Naive thymus-derived CD4-positive, alpha-beta T cell (primary cell): ENCODE measurements at regions of chr6 and their contacts with region 1.

Region 1: DNA sequence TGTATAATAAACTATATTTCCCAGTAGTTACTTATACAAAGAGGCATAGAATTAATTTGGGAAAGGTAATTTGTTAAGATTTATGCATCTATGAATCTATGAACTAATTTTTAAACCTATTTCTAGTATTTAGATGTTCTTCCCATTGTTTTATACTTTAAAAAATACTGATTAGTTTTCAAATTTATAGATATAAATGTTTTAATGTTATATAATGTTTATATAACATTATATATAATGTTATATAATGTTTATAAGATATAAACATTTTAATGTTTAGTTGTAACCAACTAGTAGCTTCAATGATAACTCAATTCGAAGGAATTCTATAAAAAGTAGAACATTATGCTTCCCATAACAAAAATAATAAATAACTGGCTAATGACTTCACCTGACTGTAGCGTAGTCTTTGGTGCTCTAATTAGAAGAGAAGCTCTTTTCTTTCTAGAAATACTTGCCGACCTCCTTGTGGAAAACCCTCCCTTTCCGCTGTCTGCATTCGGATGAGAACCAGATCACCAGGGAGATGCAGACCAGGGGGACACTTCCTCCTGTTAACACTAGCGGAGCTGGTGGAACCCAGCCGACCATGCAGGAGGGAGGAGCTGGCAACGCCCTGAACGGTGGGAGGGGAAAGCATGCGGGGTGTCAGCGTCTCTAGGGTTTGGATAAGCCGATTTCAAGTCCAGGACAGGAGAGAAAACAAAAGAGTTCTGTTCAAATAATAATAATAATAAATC is 158.4 kb downstream of the OR2B2 start:
- DNase-seq: peak in 8 of 9 donors; percentile 38 to 69 (median 45)
- ATAC-seq: peak; percentile 22
- H3K4me3 ChIP-seq: peak overlapping the region; percentile 80
- H3K4me3 Mint-ChIP-seq: peak overlapping the region; percentile 81 to 99 (median 94)
- H3K27ac ChIP-seq: peak overlapping the region; percentile 96
- H3K27ac Mint-ChIP-seq: peak overlapping the region; percentile 84 to 100 (median 97)
- H3K4me1 ChIP-seq: peaks cover 6 to 20% of the 10 kb centered on the region in 2 donors
- H3K4me1 Mint-ChIP-seq: peaks cover 17 to 53% (median 39%) of the 10 kb centered on the region in 7 donors
- H3K27me3 ChIP-seq: no peaks in the 10 kb centered on the region
- H3K27me3 Mint-ChIP-seq: peaks cover 0 to 8% (median 0%) of the 10 kb centered on the region in 5 donors

Region 2: DNA sequence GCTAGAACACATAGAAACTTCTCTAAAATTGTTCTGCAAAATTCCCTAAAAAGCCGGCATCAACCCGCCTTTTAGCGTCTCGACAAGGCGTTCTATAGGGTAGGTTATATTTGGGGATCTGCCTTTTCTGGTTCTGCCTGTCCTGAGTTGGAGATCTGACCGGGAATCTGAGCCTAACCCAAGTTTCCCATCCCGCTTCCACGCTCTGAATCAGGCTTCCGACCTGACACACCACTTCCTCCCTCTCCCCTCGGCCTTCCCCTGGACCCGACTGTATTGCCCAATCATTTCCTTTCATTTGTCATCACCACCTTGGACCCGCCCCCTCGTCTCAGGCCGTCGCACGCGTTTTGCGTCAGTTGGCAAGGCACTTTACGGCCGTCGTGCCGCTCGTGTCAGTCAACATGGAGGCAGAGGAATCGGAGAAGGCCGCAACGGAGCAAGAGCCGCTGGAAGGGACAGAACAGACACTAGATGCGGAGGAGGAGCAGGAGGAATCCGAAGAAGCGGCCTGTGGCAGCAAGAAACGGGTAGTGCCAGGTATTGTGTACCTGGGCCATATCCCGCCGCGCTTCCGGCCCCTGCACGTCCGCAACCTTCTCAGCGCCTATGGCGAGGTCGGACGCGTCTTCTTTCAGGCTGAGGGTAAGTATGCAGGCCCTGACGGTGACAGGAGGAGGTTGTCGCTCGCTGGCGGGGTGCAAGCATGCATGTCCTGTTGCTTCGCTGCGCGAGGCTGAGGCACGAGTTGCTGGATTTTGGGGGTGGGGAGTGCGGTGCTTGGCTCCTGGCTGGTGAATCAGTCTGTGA is 1157.1 kb before region 1 on chr6 and contains the start of gene ABT1:
- CTCF ChIA-PET with region 1: no interaction called
- POLR2A ChIA-PET with region 1: no interaction called
- intact Hi-C with region 1: loop called in 1 of 2 experiments (anchors 1 kb)
- DNase-seq: peak; percentile 87 to 96 (median 95)
- ATAC-seq: peak; percentile 95
- H3K4me3 ChIP-seq: peak within 1 kb of the TSS; percentile 81
- H3K4me3 Mint-ChIP-seq: no peak within 1 kb of the TSS
- H3K27ac ChIP-seq: peak within 1 kb of the TSS; percentile 89
- H3K27ac Mint-ChIP-seq: peak within 1 kb of the TSS in 1 of 9 donors; percentile 92
- H3K4me1 ChIP-seq: peaks cover 17 to 22% of the 10 kb centered on the region in 2 donors
- H3K4me1 Mint-ChIP-seq: peaks cover 5 to 20% (median 10%) of the 10 kb centered on the region in 7 donors
- H3K27me3 ChIP-seq: peaks cover 8 to 14% of the 10 kb centered on the region in 2 donors
- H3K27me3 Mint-ChIP-seq: peaks cover 3 to 28% (median 16%) of the 10 kb centered on the region in 5 donors
- total RNA-seq, gene ABT1: 23.3 to 37.5 (median 35.0) TPM

Region 3: GRCh38 chr6:27332692-27333641 is 420.9 kb before region 1 on chr6:
- CTCF ChIA-PET with region 1: no interaction called
- POLR2A ChIA-PET with region 1: no interaction called
- intact Hi-C with region 1: loop called in 1 of 2 experiments (anchors 1 kb)
- DNase-seq: peak in 8 of 9 donors; percentile 18 to 79 (median 68)
- ATAC-seq: peak; percentile 74
- H3K4me3 ChIP-seq: peak overlapping the region; percentile 60
- H3K4me3 Mint-ChIP-seq: peak overlapping the region; percentile 67 to 94 (median 87)
- H3K27ac ChIP-seq: no peak overlapping the region
- H3K27ac Mint-ChIP-seq: peak overlapping the region; percentile 0 to 97 (median 84)
- H3K4me1 ChIP-seq: peaks cover 0 to 3% of the 10 kb centered on the region in 2 donors
- H3K4me1 Mint-ChIP-seq: peaks cover 7 to 21% (median 13%) of the 10 kb centered on the region in 7 donors
- H3K27me3 ChIP-seq: peaks cover 0 to 8% of the 10 kb centered on the region in 2 donors
- H3K27me3 Mint-ChIP-seq: peaks cover 21 to 53% (median 25%) of the 10 kb centered on the region in 5 donors

Region 4: GRCh38 chr6:27592481-27593199 is 161.2 kb before region 1 on chr6:
- CTCF ChIA-PET with region 1: no interaction called
- POLR2A ChIA-PET with region 1: no interaction called
- intact Hi-C with region 1: loop called in 1 of 2 experiments (anchors 5 kb)
- DNase-seq: peak in 4 of 9 donors; percentile 10 to 58 (median 28)
- ATAC-seq: no peak
- H3K4me3 ChIP-seq: no peak overlapping the region
- H3K4me3 Mint-ChIP-seq: no peak overlapping the region
- H3K27ac ChIP-seq: no peak overlapping the region
- H3K27ac Mint-ChIP-seq: no peak overlapping the region
- H3K4me1 ChIP-seq: peaks cover 0 to 11% of the 10 kb centered on the region in 2 donors
- H3K4me1 Mint-ChIP-seq: peaks cover 0 to 4% (median 0%) of the 10 kb centered on the region in 7 donors
- H3K27me3 ChIP-seq: peaks cover 25 to 29% of the 10 kb centered on the region in 2 donors
- H3K27me3 Mint-ChIP-seq: peaks cover 24 to 46% (median 43%) of the 10 kb centered on the region in 5 donors

Region 5: GRCh38 chr6:27809939-27810767 is 56.3 kb after region 1 on chr6:
- CTCF ChIA-PET with region 1: interaction called, 3 read pairs
- POLR2A ChIA-PET with region 1: interaction called, 10 read pairs
- intact Hi-C with region 1: loop called in 1 of 2 experiments (anchors 1 kb)
- DNase-seq: peak; percentile 66 to 96 (median 92)
- ATAC-seq: peak; percentile 71
- H3K4me3 ChIP-seq: peak overlapping the region; percentile 76
- H3K4me3 Mint-ChIP-seq: peak overlapping the region; percentile 81 to 97 (median 94)
- H3K27ac ChIP-seq: peak overlapping the region; percentile 86
- H3K27ac Mint-ChIP-seq: peak overlapping the region; percentile 95 to 99 (median 98)
- H3K4me1 ChIP-seq: peaks cover 20 to 42% of the 10 kb centered on the region in 2 donors
- H3K4me1 Mint-ChIP-seq: peaks cover 18 to 82% (median 61%) of the 10 kb centered on the region in 7 donors
- H3K27me3 ChIP-seq: no peaks in the 10 kb centered on the region
- H3K27me3 Mint-ChIP-seq: peaks cover 0 to 9% (median 0%) of the 10 kb centered on the region in 5 donors

Region 6: GRCh38 chr6:28335564-28336283 is 581.9 kb after region 1 on chr6 and contains the start of gene ZSCAN31:
- CTCF ChIA-PET with region 1: no interaction called
- POLR2A ChIA-PET with region 1: no interaction called
- intact Hi-C with region 1: loop called in 1 of 2 experiments (anchors 5 kb)
- DNase-seq: peak; percentile 43 to 87 (median 76)
- ATAC-seq: peak; percentile 95
- H3K4me3 ChIP-seq: peak within 1 kb of the TSS; percentile 97
- H3K4me3 Mint-ChIP-seq: peak within 1 kb of the TSS in 1 of 10 donors; percentile 58
- H3K27ac ChIP-seq: peak within 1 kb of the TSS; percentile 92
- H3K27ac Mint-ChIP-seq: peak within 1 kb of the TSS in 1 of 9 donors; percentile 47
- H3K4me1 ChIP-seq: peaks cover 9 to 10% of the 10 kb centered on the region in 2 donors
- H3K4me1 Mint-ChIP-seq: peaks cover 0 to 16% (median 9%) of the 10 kb centered on the region in 7 donors
- H3K27me3 ChIP-seq: no peaks in the 10 kb centered on the region
- H3K27me3 Mint-ChIP-seq: peaks cover 0 to 3% (median 0%) of the 10 kb centered on the region in 5 donors
- total RNA-seq, gene ZSCAN31: 0.93 to 2.4 (median 1.2) TPM